Colonic mucosa (tissue), 4 donors: ENCODE measurements at regions of chr6 and their contacts with region 1.

Region 1: DNA sequence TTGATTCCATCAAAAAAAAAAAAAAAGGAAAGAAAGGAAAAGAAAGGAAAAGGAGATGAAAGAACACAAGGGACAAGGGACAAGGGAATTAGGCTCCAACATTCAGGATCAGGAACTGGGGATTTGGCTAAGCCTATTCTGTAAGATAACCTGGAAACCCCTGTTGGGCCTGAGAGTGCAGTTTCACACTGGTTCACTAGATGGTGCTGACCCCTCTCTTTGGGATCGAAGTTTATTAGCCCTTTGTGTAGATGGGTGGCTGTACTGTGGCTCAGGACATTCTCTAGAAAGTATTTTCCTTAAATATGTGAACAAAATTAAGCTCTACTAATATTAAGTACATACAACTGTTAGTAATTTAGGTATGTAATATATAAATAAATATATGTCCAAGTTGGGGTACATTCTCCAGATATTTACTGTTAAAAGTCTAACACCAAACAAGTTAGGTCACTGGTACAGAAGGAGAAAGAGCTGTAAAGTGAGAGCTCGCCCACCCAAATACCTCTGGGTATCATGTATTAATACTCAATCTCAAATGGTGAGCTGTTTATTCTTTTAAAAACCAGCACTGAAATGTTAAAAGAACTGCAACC is 6.3 kb downstream of the OR2A4 start:
- DNase-seq: peak; percentile 49
- H3K4me3 ChIP-seq: no peak overlapping the region
- H3K27ac ChIP-seq: no peak overlapping the region
- H3K4me1 ChIP-seq: no peaks in the 10 kb centered on the region
- H3K27me3 ChIP-seq: no peaks in the 10 kb centered on the region
- CTCF ChIP-seq: peak; percentile 66

Region 2: DNA sequence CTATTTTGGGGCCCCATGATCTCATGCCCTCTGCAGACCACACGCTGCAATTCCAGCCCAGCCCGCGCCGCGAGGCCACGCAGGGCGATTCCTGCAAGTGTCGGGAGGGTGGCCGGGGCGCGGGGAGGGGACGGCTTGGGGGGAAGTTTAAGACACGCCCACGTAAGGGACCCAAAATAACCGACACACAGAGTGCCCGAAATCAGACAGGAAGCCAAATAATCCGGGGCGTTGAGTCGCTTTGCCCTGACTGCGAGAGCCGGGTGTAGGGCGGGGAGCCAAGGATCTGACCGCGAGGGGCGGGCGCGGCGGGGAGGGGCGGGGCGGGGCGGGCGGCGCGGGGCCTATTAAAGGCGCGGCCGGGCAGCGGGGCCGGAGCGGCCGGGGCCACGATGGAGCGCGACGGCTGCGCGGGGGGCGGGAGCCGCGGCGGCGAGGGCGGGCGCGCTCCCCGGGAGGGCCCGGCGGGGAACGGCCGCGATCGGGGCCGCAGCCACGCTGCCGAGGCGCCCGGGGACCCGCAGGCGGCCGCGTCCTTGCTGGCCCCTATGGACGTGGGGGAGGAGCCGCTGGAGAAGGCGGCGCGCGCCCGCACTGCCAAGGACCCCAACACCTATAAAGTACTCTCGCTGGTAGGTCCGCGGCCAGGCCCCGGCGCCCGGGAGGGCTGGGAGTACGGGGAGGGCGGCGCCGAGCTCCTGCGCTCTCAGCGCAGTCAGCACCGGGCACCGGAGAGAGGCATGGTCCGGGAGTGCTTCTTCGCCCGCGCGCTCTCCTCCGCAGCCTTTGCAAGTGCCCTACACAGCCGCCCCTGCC is 112.9 kb after region 1 on chr6 and contains the start of gene ENPP1:
- intact Hi-C with region 1: loop called (anchors 10 kb)
- DNase-seq: peak; percentile 82
- H3K4me3 ChIP-seq: peak within 1 kb of the TSS; percentile 55
- H3K27ac ChIP-seq: no peak within 1 kb of the TSS
- H3K4me1 ChIP-seq: no peaks in the 10 kb centered on the region
- H3K27me3 ChIP-seq: no peaks in the 10 kb centered on the region
- CTCF ChIP-seq: peak; percentile 15
- total RNA-seq, gene ENPP1: 5.9 to 12.6 TPM